Activated naive CD4-positive, alpha-beta T cell treated with anti-CD3 and anti-CD28 coated beads, Interleukin-2, amount 10 ng/mL, durations not matched to agents 7 days and 5 days (primary cell): ENCODE measurements at regions of chr10 and their contacts with region 1.

Region 1: GRCh38 chr10:69506834-69507721 is 55.8 kb downstream of the TSPAN15 start:
- DNase-seq: no peak
- H3K4me3 Mint-ChIP-seq: no peak overlapping the region
- H3K27ac Mint-ChIP-seq: peak overlapping the region; percentile 61
- H3K4me1 Mint-ChIP-seq: peaks cover 15% of the 10 kb centered on the region
- H3K27me3 Mint-ChIP-seq: peaks cover 33% of the 10 kb centered on the region

Region 2: DNA sequence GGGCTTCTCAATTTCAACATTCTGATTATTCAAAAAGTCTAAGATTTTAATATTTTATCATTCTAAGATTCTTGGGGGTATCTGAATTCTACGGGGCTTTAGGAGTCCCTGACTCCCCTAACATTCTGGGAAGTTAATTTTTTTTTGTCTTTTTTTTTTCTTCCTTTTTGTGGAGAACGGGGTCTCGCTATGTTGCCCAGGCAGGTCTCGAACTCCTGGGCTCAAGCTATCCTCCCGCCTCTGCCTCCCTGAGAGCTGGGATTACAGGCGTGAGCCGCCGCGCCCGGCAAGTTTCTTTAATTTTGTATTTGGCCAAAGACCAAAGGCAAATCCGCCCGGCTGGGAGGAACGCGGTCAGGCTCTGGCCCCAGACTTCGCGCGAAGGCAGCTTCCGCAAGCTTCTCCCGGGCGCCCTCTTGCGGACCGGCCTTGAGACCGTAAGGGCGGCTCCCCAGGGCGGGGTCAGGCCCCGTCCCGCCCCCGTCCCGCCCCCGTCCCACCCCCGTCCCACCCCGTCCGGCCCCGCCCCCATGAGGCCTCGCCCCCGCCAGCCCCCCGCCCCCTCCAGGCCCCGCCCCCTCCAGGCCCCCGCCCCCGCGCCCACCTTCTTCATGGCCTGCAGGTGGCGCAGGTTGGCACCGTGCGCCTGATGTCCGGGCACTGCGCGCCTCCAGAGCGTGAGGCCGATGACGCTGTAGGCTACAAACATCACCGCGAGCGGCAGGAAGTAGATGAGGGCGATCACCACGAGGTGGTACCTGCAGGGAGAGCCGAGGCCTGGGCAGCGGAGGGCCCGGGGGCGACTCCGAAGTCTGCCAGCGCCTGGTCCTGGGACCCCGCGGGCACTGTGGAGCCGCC is 98.5 kb before region 1 on chr10:
- CTCF ChIA-PET with region 1: interaction called, 40 read pairs
- DNase-seq: peak; percentile 92
- H3K4me3 Mint-ChIP-seq: peak overlapping the region; percentile 50
- H3K27ac Mint-ChIP-seq: peak overlapping the region; percentile 91
- H3K4me1 Mint-ChIP-seq: peaks cover 34% of the 10 kb centered on the region
- H3K27me3 Mint-ChIP-seq: peaks cover 3% of the 10 kb centered on the region

Region 3: GRCh38 chr10:69428165-69428564 is 78.9 kb before region 1 on chr10:
- CTCF ChIA-PET with region 1: interaction called, 29 read pairs
- DNase-seq: no peak
- H3K4me3 Mint-ChIP-seq: no peak overlapping the region
- H3K27ac Mint-ChIP-seq: no peak overlapping the region
- H3K4me1 Mint-ChIP-seq: peaks cover 47% of the 10 kb centered on the region
- H3K27me3 Mint-ChIP-seq: peaks cover 20% of the 10 kb centered on the region

Region 4: GRCh38 chr10:69438242-69439068 is 68.6 kb before region 1 on chr10:
- CTCF ChIA-PET with region 1: interaction called, 13 read pairs
- DNase-seq: no peak
- H3K4me3 Mint-ChIP-seq: no peak overlapping the region
- H3K27ac Mint-ChIP-seq: no peak overlapping the region
- H3K4me1 Mint-ChIP-seq: peaks cover 3% of the 10 kb centered on the region
- H3K27me3 Mint-ChIP-seq: peaks cover 53% of the 10 kb centered on the region

Region 5: GRCh38 chr10:69449841-69450240 is 57.2 kb before region 1 on chr10:
- CTCF ChIA-PET with region 1: interaction called, 16 read pairs
- DNase-seq: peak; percentile 68
- H3K4me3 Mint-ChIP-seq: peak overlapping the region; percentile 29
- H3K27ac Mint-ChIP-seq: peak overlapping the region; percentile 11
- H3K4me1 Mint-ChIP-seq: peaks cover 40% of the 10 kb centered on the region
- H3K27me3 Mint-ChIP-seq: peaks cover 37% of the 10 kb centered on the region